Endothelial cell of umbilical vein (primary cell): ENCODE measurements at regions of chr12 and their contacts with region 1.

Region 1: DNA sequence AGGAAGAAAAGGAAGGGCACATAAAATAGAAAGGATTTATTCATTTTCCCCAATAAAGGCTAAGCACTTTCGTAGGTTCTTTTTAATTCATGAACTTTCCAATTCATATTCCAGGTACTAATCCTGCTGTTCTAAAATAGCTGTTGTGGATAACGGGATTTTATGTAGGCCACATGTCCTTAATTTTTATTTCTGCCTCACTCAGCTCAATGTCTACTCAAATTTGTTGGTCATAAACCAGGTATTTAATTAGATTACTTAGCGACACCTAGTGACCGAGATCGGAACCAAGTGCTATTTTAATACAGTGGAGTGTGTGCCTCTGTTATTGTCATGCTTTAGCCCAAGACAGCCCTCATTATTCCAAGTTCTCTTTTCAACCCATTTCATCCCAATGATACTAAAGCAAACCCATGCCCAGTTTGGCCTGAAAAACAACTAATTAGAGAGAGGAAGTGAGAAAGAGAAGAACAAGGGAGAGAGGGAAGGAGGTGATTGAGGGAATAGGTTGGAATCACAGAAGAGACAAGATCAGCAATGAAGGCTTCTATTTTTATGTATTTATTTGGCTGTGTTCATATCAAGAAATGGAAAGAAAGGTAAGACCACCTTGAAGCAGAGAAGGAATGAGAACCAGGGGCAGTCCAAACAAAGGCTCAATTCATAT is 45.9 kb upstream of the IFNG-AS1 start:
- DNase-seq: peak; percentile 64
- H3K4me3 ChIP-seq: no peak overlapping the region
- H3K27ac ChIP-seq: no peak overlapping the region
- H3K4me1 ChIP-seq: no peaks in the 10 kb centered on the region
- H3K27me3 ChIP-seq: peaks cover 0 to 4% of the 10 kb centered on the region in 2 experiments
- CTCF ChIP-seq: peak; percentile 44 to 50
- POLR2A ChIP-seq: no peak

Region 2: GRCh38 chr12:66733839-66734238 is 1209.5 kb before region 1 on chr12:
- CTCF ChIA-PET with region 1: no interaction called
- POLR2A ChIA-PET with region 1: no interaction called
- dilution Hi-C with region 1: no loop called
- intact Hi-C with region 1: no loop called
- DNase-seq: no peak
- H3K4me3 ChIP-seq: no peak overlapping the region
- H3K27ac ChIP-seq: no peak overlapping the region
- H3K4me1 ChIP-seq: no peaks in the 10 kb centered on the region
- H3K27me3 ChIP-seq: peaks cover 2 to 6% of the 10 kb centered on the region in 2 experiments
- CTCF ChIP-seq: no peak
- POLR2A ChIP-seq: no peak

Region 3: DNA sequence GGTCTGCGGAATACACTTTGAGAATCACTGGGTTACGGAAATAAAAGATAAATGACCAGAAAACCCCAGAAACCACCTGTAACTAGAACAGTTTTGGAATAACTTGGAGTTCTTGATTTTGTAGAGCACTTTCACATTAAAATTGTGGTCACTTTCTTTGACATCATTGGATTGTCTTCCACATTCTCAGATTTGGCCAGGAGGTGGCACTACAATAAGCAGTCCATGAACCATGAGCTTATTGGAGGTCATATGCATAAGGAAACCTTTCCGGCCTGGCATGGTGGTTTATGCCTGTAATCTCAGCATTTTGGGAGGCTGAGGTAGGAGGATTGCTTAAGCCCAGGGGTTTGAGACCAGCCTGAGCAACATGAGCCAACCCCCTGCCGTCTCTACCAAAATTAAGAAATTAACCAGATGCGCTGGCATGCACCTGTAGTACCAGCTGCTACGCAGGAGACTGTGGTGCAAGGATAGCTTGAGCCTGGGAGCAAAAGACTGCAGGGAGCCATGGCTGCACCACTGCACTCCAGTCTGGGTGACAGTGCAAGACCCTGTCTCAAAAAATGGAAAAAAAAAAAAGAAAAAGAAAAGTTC is 781.9 kb before region 1 on chr12:
- CTCF ChIA-PET with region 1: interaction called, 38 read pairs
- POLR2A ChIA-PET with region 1: no interaction called
- dilution Hi-C with region 1: no loop called
- intact Hi-C with region 1: loop called (anchors 5 kb)
- DNase-seq: peak; percentile 39
- H3K4me3 ChIP-seq: no peak overlapping the region
- H3K27ac ChIP-seq: no peak overlapping the region
- H3K4me1 ChIP-seq: no peaks in the 10 kb centered on the region
- H3K27me3 ChIP-seq: no peaks in the 10 kb centered on the region
- CTCF ChIP-seq: peak; percentile 26 to 43
- POLR2A ChIP-seq: no peak

Region 4: DNA sequence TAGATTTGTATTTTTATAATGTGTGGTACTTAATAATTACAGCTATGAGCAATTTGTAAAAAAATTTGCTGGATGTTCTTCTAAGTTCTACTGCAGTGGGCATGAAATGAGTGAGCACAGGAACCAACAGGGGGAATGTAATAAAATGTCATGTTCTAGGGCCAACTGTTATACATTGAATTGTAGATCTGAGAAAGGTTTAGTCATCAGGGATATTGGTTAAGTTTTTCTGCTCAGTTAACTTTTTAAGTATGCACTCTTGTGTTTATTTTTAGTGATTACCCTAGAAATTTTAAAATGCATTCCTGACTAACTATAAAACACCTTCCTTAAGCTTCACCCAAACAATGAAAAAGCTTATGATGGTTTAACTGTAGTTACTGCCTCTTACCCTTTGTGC is 572.4 kb before region 1 on chr12:
- CTCF ChIA-PET with region 1: interaction called, 18 read pairs
- POLR2A ChIA-PET with region 1: no interaction called
- dilution Hi-C with region 1: no loop called
- intact Hi-C with region 1: no loop called
- DNase-seq: no peak
- H3K4me3 ChIP-seq: no peak overlapping the region
- H3K27ac ChIP-seq: no peak overlapping the region
- H3K4me1 ChIP-seq: no peaks in the 10 kb centered on the region
- H3K27me3 ChIP-seq: no peaks in the 10 kb centered on the region
- CTCF ChIP-seq: no peak
- POLR2A ChIP-seq: no peak

Region 5: DNA sequence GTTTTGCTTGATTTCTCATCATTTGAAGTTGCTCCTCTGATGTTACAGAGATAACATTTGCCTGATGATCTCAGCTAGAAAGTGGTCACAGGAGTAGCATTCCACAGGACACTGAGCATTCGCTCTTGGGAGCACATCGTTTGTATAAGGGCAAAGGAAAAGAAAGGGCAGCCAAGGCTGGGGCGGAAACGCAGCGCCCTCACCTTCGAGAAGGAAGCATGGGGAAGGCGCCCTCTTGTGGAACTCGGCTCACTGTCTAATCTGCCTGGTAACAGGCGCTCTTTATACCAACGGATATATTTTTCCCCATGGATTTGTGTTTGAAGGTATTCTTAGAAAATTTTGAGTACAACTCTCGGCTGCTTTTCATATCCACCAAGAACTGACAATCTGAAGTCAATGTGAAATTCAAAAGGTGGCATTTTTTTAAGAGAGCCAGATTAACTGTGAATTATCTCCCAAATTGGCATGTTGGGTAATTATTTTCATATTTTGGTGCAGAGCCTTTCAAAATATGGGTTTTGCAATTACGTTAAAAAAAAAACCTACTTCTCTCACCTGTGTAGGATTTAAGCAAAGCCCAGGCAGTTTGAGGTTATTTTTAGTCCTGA is 501.5 kb before region 1 on chr12:
- CTCF ChIA-PET with region 1: interaction called, 11 read pairs
- POLR2A ChIA-PET with region 1: no interaction called
- dilution Hi-C with region 1: no loop called
- intact Hi-C with region 1: loop called (anchors 1 kb)
- DNase-seq: peak; percentile 47
- H3K4me3 ChIP-seq: no peak overlapping the region
- H3K27ac ChIP-seq: no peak overlapping the region
- H3K4me1 ChIP-seq: no peaks in the 10 kb centered on the region
- H3K27me3 ChIP-seq: no peaks in the 10 kb centered on the region
- CTCF ChIP-seq: peak; percentile 68 to 69
- POLR2A ChIP-seq: no peak

Region 6: DNA sequence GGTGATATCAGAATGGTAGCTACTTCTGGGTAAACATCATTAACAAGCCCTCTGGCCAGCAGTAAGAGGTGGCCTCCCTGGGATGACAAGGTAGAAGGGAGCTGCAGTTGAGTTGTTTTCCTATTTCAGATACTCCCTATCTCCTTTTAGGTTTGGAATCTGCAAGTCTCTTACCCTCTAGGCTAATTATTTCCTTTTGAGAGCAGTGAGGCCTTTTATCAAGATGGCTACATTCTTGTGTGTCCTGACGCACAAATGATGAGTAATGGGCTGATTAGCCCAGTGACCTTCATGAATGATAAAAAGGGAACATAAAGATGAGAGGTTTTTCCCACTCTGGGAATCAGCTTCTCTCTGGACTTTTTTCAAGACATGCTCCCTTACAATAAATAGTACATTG is 272.0 kb before region 1 on chr12:
- CTCF ChIA-PET with region 1: no interaction called
- POLR2A ChIA-PET with region 1: no interaction called
- dilution Hi-C with region 1: no loop called
- intact Hi-C with region 1: no loop called
- DNase-seq: no peak
- H3K4me3 ChIP-seq: no peak overlapping the region
- H3K27ac ChIP-seq: no peak overlapping the region
- H3K4me1 ChIP-seq: no peaks in the 10 kb centered on the region
- H3K27me3 ChIP-seq: no peaks in the 10 kb centered on the region
- CTCF ChIP-seq: no peak
- POLR2A ChIP-seq: no peak

Region 7: DNA sequence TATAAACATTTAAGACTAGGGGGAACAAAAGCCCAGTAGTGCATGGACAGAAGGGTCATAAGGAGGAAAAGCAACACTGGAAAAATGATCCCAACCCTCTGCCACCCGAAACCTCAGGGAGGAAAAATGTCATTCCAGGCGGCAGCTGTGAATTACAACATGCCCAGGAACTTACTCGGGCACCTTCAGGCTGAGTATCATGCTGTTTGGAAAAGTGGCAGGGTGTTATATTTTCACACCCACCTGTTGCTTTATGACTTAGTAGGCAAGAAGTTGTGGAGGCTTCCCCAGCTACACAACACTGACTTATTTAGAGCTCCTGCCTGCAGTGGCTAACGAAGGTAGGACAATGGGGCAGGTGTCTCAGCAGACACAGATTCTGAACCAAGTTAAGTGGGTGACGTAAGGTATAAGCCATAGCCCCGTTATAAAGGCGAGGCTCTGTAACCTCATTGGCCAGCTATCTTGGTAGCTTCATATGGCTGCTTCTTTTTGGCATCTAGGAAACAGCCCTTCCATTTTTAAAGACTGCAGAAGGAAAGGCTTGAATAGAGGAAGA is 50.3 kb before region 1 on chr12:
- CTCF ChIA-PET with region 1: no interaction called
- POLR2A ChIA-PET with region 1: no interaction called
- dilution Hi-C with region 1: no loop called
- intact Hi-C with region 1: no loop called
- DNase-seq: no peak
- H3K4me3 ChIP-seq: no peak overlapping the region
- H3K27ac ChIP-seq: no peak overlapping the region
- H3K4me1 ChIP-seq: no peaks in the 10 kb centered on the region
- H3K27me3 ChIP-seq: no peaks in the 10 kb centered on the region
- CTCF ChIP-seq: no peak
- POLR2A ChIP-seq: no peak

Region 8: GRCh38 chr12:67928621-67929388 is 14.6 kb before region 1 on chr12:
- CTCF ChIA-PET with region 1: interaction called, 13 read pairs
- POLR2A ChIA-PET with region 1: no interaction called
- dilution Hi-C with region 1: no loop called
- intact Hi-C with region 1: no loop called
- DNase-seq: no peak
- H3K4me3 ChIP-seq: no peak overlapping the region
- H3K27ac ChIP-seq: no peak overlapping the region
- H3K4me1 ChIP-seq: no peaks in the 10 kb centered on the region
- H3K27me3 ChIP-seq: no peaks in the 10 kb centered on the region
- CTCF ChIP-seq: no peak
- POLR2A ChIP-seq: no peak

Region 9: DNA sequence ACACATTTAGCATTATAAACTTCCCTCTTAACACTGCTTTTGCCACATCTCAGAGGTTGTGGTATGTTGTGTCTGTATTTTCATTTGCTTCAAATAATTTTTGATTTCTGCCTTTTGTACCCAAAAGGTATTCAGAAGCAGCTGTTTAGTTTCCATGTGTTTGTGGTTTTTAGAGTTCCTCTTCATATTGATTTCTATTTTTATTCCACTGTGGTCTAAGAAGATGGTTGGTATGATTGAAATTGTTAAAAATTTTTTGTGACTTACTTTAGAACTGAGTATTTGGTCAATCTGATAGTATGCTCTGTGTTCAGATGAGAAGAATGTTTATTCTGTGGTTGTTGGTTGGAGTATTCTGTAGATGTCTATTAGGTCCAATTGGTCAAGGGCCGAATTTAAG is 122.3 kb after region 1 on chr12:
- CTCF ChIA-PET with region 1: no interaction called
- POLR2A ChIA-PET with region 1: no interaction called
- dilution Hi-C with region 1: no loop called
- intact Hi-C with region 1: no loop called
- DNase-seq: no peak
- H3K4me3 ChIP-seq: no peak overlapping the region
- H3K27ac ChIP-seq: no peak overlapping the region
- H3K4me1 ChIP-seq: no peaks in the 10 kb centered on the region
- H3K27me3 ChIP-seq: no peaks in the 10 kb centered on the region
- CTCF ChIP-seq: no peak
- POLR2A ChIP-seq: no peak